ENCODE measurements at regions of chrX and their contacts with region 1.

Region 1: DNA sequence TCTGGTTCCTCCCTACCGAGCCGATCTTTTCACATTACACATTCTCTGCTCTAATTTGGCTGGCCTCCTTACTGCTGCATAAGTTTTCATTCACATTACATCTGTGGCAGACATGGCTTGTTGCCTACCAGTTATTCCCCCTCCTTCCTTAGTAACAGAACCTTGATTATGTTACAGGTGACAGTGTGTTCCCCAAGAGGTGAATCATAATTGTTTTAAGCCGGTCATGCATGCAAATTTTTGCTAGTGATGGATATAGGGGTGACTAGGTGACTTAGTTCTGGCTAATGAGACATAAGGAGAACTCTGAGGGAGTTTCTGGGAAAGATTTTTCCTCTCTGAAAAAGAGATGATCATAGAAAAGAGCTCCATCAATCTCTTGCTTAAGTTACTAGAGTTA is 8.4 kb upstream of the LAMP2 start:
- DNase-seq: no peak
- ATAC-seq: no peak
- H3K4me3 ChIP-seq: no peak overlapping the region
- H3K4me3 Mint-ChIP-seq: no peak overlapping the region
- H3K27ac ChIP-seq: no peak overlapping the region
- H3K27ac Mint-ChIP-seq: no peak overlapping the region
- H3K4me1 ChIP-seq: no peaks in the 10 kb centered on the region
- H3K4me1 Mint-ChIP-seq: no peaks in the 10 kb centered on the region
- H3K27me3 ChIP-seq: no peaks in the 10 kb centered on the region
- H3K27me3 Mint-ChIP-seq: no peaks in the 10 kb centered on the region
- CTCF ChIP-seq: no peak

Region 2: GRCh38 chrX:120308959-120309872 is 168.2 kb before region 1 on chrX:
- CTCF ChIA-PET with region 1: interaction called, 3 read pairs
- POLR2A ChIA-PET with region 1: no interaction called
- intact Hi-C with region 1: loop called in 1 of 2 experiments (anchors 5 kb)
- DNase-seq: peak; percentile 45 to 89 (median 65)
- ATAC-seq: peak; percentile 95
- H3K4me3 ChIP-seq: peak overlapping the region; percentile 64
- H3K4me3 Mint-ChIP-seq: peak overlapping the region; percentile 85
- H3K27ac ChIP-seq: no peak overlapping the region
- H3K27ac Mint-ChIP-seq: peak overlapping the region; percentile 72
- H3K4me1 ChIP-seq: peaks cover 29% of the 10 kb centered on the region
- H3K4me1 Mint-ChIP-seq: peaks cover 25% of the 10 kb centered on the region
- H3K27me3 ChIP-seq: peaks cover 10 to 24% of the 10 kb centered on the region in 2 experiments
- H3K27me3 Mint-ChIP-seq: peaks cover 49% of the 10 kb centered on the region
- CTCF ChIP-seq: peak; percentile 51

Region 3: GRCh38 chrX:120358737-120359456 is 118.6 kb before region 1 on chrX:
- CTCF ChIA-PET with region 1: no interaction called
- POLR2A ChIA-PET with region 1: no interaction called
- intact Hi-C with region 1: no loop called
- DNase-seq: no peak
- ATAC-seq: no peak
- H3K4me3 ChIP-seq: no peak overlapping the region
- H3K4me3 Mint-ChIP-seq: no peak overlapping the region
- H3K27ac ChIP-seq: no peak overlapping the region
- H3K27ac Mint-ChIP-seq: no peak overlapping the region
- H3K4me1 ChIP-seq: no peaks in the 10 kb centered on the region
- H3K4me1 Mint-ChIP-seq: no peaks in the 10 kb centered on the region
- H3K27me3 ChIP-seq: no peaks in the 10 kb centered on the region
- H3K27me3 Mint-ChIP-seq: no peaks in the 10 kb centered on the region
- CTCF ChIP-seq: no peak

Region 4: DNA sequence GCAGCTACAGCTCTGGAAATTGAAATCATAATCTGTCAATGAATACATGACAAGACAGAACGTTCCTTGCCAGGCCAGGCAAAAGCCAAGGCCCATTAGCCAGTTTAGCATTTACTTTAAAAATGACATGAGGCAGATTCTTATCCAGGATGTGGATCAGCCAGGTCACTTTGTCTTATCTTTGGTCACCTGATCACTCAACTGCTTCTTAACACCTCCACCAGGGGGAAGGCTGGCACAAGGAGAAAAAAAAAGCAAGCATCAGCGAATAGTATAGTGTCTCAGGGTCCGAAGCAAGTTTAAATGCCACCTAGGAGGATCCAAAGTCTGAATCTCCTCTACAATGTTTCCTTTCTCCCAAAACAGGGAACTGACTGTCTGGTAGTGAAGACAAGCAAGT is 96.8 kb before region 1 on chrX:
- CTCF ChIA-PET with region 1: interaction called, 3 read pairs
- POLR2A ChIA-PET with region 1: no interaction called
- intact Hi-C with region 1: loop called (anchors 1 to 2 kb)
- DNase-seq: peak in 9 of 14 experiments; percentile 0 to 71 (median 29)
- ATAC-seq: peak; percentile 74
- H3K4me3 ChIP-seq: no peak overlapping the region
- H3K4me3 Mint-ChIP-seq: no peak overlapping the region
- H3K27ac ChIP-seq: no peak overlapping the region
- H3K27ac Mint-ChIP-seq: no peak overlapping the region
- H3K4me1 ChIP-seq: peaks cover 4% of the 10 kb centered on the region
- H3K4me1 Mint-ChIP-seq: no peaks in the 10 kb centered on the region
- H3K27me3 ChIP-seq: no peaks in the 10 kb centered on the region
- H3K27me3 Mint-ChIP-seq: no peaks in the 10 kb centered on the region
- CTCF ChIP-seq: peak; percentile 48